AG04449 (cell line): ENCODE measurements at regions of chr16 and their contacts with region 1.

Region 1: DNA sequence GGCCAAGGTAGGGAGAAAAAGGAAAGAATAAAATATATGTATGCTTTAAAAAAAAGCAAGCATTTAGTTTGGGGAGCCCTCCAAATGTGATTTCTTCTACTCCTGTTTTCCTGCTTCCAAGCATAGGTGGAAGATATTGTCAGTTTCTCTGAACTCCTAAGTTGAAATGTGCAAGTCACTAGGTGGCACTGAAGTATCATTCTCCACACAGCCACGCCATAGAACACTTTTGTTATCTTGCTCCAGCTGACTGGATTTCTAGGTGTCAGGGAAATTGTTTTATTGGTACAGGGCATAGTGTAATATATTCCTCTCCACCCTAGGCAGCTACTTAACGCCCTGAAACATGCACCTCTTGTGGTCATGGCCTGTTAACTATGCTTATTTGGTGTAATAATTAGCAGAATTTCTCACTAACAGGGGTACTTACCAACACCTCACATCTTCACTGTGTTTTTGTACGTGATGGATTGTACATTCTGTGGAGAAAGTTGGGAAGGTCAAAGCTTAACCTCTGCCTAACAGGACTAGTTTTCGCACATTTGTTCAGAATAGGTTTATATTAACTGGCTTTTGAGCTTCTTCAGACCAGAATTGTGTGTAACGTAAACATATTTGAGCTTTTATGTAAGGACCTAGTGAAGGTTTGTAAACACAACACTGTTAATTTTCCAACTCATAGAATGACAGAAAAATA is 69.3 kb downstream of the FTO start:
- DNase-seq: peak; percentile 28
- H3K4me3 ChIP-seq: no peak overlapping the region
- CTCF ChIP-seq: peak; percentile 72

Region 2: GRCh38 chr16:53549970-53550690 is 223.2 kb before region 1 on chr16:
- CTCF ChIA-PET with region 1: interaction called, 29 read pairs
- POLR2A ChIA-PET with region 1: no interaction called
- DNase-seq: peak; percentile 51
- H3K4me3 ChIP-seq: peak overlapping the region; percentile 29
- CTCF ChIP-seq: peak; percentile 63

Region 3: GRCh38 chr16:53692142-53692541 is 81.2 kb before region 1 on chr16:
- CTCF ChIA-PET with region 1: no interaction called
- POLR2A ChIA-PET with region 1: no interaction called
- DNase-seq: no peak
- H3K4me3 ChIP-seq: no peak overlapping the region
- CTCF ChIP-seq: peak; percentile 21

Region 4: DNA sequence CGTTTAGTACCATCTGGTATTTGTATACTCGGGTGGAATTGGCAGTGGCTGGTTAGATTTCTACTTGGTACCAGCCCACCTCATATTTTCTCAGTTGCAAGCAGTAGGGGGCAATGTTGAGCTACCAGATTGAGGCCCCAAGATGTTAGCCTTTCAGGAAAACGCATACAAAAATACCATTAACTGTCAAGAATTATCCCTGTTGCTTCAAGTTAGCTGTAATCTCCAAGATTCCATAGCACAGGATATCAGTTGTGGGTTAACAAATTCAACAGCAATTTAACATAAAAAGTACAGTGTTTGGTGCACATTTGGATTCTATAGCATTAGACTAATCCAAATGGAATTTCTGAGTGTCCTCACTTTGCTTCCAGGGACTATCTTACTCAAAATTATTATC is 118.9 kb after region 1 on chr16:
- CTCF ChIA-PET with region 1: interaction called, 54 read pairs
- POLR2A ChIA-PET with region 1: no interaction called
- DNase-seq: peak; percentile 65
- H3K4me3 ChIP-seq: no peak overlapping the region
- CTCF ChIP-seq: peak; percentile 70

Region 5: GRCh38 chr16:53945996-53946395 is 172.7 kb after region 1 on chr16:
- CTCF ChIA-PET with region 1: interaction called, 35 read pairs
- POLR2A ChIA-PET with region 1: no interaction called
- DNase-seq: no peak
- H3K4me3 ChIP-seq: no peak overlapping the region
- CTCF ChIP-seq: peak; percentile 54

Region 6: DNA sequence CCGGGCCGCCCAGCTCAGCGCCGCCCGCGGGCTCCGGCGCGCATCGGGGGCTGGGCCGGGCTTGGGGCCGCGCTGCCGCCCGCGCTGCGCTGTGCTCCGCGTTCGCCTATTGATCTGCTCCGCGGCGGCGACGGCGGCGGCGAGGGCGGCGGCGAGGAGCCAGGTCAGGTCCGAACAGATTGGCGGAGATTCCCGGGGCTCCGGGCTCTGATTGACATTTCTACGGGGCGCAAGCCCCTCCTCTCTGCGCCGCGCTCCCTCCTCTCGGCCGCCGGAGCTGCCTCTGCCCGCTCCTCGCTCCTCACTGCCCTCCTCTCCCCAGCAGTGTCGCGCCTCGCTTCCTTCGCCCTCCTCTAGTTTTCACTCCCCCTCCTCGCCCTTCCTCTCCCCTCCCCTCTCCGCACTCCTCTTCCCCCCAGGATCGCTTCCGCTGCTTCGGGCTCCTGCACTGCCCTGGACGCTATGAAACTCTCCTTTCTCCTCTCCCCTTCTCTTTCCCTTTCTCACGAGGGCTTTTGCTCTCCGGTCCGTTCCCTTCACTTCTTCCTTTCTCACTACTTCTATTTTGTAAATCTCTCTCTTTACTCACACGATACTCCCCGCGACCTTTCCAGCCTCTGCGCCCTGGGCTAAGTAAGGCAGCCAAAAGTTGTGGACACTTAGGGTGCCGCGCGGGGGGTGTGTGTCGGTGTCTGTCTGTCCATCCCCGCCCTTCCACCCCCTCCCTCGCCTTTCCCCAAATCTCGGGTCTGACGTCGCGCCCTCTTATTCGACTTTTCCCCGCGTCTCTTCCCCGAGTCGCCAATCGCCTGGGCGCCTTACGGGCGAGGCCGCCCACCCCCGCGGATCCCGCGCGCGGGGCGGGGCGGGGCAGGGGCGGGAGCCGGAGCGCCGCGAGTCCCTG is 513.0 kb after region 1 on chr16 and contains the start of gene IRX3:
- CTCF ChIA-PET with region 1: interaction called, 37 read pairs
- POLR2A ChIA-PET with region 1: interaction called, 4 read pairs
- DNase-seq: peak; percentile 40
- H3K4me3 ChIP-seq: peak within 1 kb of the TSS; percentile 76
- CTCF ChIP-seq: no peak

Region 7: DNA sequence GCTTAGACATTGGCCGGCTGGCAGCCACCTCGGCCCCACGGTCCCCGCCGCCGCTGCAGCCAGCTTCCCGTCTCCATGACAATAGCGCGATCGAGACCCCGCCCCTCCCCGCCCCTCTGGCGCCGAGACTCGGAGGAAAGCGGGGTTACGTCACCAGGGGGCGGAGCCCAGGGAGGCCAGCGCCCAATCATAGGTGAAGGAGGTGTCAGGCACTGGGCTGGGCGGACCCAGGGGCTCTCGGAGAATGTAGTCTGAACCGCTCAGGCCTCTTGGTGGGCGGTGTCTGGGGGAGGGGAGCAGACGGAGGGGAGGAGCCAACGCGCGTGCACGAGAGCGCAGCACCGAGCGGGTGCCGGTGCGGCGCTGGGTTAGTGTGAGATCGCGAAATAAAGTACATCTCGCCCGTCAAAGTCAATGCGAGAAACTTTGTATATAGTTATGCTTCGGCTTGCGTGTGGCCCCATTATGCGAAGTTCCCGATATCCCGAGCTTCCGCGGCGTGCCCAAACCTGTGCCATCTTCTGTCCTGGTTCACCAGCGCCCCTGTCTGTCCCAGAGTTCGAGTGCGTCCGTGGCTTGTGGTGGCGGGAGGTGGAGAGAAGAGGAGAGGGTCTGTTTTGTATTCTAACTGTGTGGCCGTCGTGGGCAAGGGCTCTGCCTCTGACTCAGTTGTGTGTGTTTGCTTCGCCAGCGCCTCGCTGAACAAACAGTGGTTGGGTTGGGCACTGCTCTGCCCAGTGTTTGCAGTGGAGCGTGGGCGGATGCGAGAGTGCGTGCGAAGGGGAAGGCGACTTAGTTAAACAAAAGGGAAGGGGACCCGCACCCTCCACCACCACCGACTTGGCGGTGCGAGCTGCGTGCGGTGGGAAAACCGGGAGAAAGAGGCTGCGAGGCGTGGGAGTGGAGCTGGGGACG is 1156.0 kb after region 1 on chr16:
- CTCF ChIA-PET with region 1: interaction called, 12 read pairs
- POLR2A ChIA-PET with region 1: no interaction called
- DNase-seq: peak; percentile 92
- H3K4me3 ChIP-seq: peak overlapping the region; percentile 78
- CTCF ChIP-seq: peak; percentile 31